Stomach (tissue), 19 donors: ENCODE measurements at regions of chr1 and their contacts with region 1.

Region 1: DNA sequence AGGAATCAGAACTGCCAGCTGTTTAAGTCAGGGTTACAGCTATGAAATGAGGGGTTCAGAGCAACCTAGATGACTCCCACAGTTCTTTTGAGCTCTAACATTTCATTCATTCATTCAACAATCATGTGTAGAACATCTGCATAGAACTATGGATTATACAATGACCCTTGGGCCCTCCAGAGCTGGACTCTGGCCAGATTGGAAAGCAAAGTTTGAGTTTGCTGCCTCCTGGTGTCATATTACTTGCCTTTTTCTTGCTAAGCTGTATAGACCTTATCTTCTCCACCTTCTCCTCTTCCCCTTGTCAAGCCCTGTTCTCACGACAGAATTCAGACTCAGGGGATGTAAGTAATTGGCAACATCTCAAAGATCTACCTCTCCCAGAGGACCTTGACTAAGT is 4.0 kb downstream of the CASQ2 start:
- DNase-seq: peak; percentile 58 to 73
- H3K4me3 ChIP-seq: no peak overlapping the region
- H3K27ac ChIP-seq: peak overlapping the region in 1 of 5 donors; percentile 88
- H3K4me1 ChIP-seq: peaks cover 0 to 6% (median 2%) of the 10 kb centered on the region in 4 donors
- H3K27me3 ChIP-seq: no peaks in the 10 kb centered on the region
- CTCF ChIP-seq: peak in 4 of 7 experiments; percentile 17 to 55 (median 30)
- EP300 ChIP-seq: no peak
- POLR2A ChIP-seq: no peak

Region 2: DNA sequence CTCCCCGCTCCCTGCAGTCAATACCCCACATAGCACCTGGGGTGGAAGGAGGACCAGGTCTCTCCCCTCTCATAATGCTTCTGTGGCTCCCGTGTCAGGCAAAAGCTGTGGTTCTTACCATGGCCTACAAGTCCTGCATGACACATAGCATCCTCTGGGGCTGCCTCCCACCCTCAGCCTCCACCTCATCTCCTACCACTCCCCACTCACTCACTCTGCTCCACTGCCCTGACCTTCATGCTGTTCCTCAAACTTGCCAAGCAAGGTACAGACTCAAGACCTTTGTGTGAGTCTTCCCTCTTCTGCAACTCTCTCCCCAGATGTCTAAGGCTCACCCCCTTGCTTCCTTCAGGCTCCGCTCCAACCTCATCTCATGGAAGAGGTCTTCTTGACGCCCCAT is 150.8 kb before region 1 on chr1:
- intact Hi-C with region 1: loop called (anchors 5 kb)
- DNase-seq: no peak
- H3K4me3 ChIP-seq: no peak overlapping the region
- H3K27ac ChIP-seq: no peak overlapping the region
- H3K4me1 ChIP-seq: no peaks in the 10 kb centered on the region
- H3K27me3 ChIP-seq: no peaks in the 10 kb centered on the region
- CTCF ChIP-seq: no peak
- EP300 ChIP-seq: no peak
- POLR2A ChIP-seq: no peak

Region 3: GRCh38 chr1:115717541-115717940 is 47.0 kb before region 1 on chr1:
- intact Hi-C with region 1: loop called (anchors 10 kb)
- DNase-seq: peak; percentile 43 to 75
- H3K4me3 ChIP-seq: no peak overlapping the region
- H3K27ac ChIP-seq: no peak overlapping the region
- H3K4me1 ChIP-seq: peaks cover 0 to 12% (median 11%) of the 10 kb centered on the region in 4 donors
- H3K27me3 ChIP-seq: no peaks in the 10 kb centered on the region
- CTCF ChIP-seq: peak in 5 of 7 experiments; percentile 16 to 54 (median 38)
- EP300 ChIP-seq: no peak
- POLR2A ChIP-seq: no peak